ENCODE measurements at regions of chr6 and their contacts with region 1.

Region 1: DNA sequence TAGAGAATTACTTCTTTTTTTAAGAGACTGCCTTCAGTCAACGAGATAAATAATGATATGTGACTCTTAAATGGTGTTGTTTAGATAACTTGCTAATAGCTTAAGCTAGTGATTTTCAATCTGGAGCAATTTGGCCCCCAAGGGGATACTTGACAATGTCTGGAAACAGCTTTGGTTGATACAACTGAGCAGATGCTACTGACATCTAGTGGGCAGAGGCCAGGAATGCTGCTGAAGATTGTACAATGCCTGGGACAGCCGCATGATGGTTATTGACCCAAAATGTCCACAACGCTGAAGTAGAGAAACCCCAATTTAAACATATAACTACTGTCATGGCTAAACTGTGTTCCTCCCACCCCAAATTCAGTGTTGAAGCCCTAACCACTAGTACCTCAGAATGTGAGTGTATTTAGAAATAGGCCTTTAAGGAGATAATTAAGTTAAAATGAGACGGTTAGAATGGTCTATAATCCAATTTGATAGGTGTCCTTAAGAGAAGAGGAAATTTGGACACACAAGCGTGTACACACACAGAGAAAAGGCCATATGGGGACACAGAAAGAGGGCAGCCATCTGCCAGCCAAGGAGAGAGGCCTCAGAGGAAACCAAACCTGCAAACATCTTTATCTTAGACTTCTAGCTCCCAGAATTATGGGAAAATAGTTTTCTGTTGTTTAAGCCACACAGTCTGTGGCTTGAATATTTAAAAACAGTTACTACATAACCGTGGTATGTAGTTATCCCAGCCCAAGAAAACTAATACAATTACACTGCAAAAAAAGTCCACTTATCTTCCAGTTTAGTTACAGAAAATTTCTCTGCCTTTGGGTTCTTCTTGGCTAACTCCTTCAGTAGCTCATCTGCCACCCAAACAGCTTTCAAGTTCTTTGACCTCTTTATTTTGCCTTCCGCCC is 22.2 kb downstream of the RWDD2A start:
- DNase-seq: peak; percentile 52 to 63
- H3K4me3 ChIP-seq: no peak overlapping the region
- H3K4me3 Mint-ChIP-seq: no peak overlapping the region
- H3K27ac Mint-ChIP-seq: no peak overlapping the region
- H3K4me1 ChIP-seq: no peaks in the 10 kb centered on the region; the same call in 1 of the 2 replicates
- H3K4me1 Mint-ChIP-seq: peaks cover 6% of the 10 kb centered on the region
- H3K27me3 ChIP-seq: no peaks in the 10 kb centered on the region
- H3K27me3 Mint-ChIP-seq: no peaks in the 10 kb centered on the region
- CTCF ChIP-seq: peak; percentile 46 to 89

Region 2: DNA sequence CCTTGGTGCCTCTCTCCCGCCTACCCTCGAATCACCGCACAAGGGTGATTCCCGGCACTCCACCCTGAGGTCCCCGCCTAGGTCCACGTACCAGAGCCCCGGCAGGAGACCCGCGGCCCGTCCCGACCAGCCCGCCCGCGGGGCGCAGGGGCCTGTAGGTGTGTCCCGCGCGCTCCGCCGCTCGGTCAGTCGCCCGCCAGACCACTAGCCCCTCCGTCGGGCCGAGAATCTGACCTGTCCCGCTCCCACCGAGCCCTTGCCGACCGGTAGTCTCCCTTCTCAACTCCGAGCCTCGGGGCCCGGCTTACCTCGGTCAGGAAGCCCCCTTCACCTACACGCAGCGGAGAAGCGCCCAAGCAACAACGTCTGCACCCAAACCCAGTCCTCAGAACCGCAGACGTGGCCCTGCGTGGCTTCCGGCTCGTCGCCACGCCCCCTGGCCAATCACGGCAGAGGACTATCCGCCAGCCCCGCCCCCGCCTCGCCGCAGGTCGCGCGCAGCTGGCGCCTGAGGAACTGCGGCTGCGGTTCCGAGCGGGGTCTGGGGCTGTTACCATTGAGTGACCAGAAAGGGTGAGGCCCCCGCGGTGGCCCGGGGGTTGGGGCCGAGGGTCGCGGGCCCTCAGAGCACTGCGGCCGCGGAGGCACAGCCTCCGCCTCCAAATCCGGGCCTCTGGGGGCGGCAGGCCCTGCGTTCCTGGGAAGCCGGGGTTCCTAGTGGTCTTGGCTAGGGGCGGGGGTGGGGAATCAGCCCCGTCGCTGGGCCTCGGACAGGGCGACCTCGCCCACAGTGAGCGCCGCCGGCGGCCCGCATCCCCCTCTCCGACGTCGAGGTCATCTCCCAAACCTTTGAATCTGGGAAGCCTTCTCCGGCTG is 22.3 kb before region 1 on chr6 and contains the starts of genes PGM3 and RWDD2A:
- CTCF ChIA-PET with region 1: no interaction called
- POLR2A ChIA-PET with region 1: interaction called, 7 read pairs
- intact Hi-C with region 1: loop called (anchors 1 kb)
- DNase-seq: peak; percentile 89 to 94
- H3K4me3 ChIP-seq: peak within 1 kb of the TSS; percentile 97
- H3K4me3 Mint-ChIP-seq: peak within 1 kb of the TSS; percentile 90
- H3K27ac Mint-ChIP-seq: peak within 1 kb of the TSS; percentile 92
- H3K4me1 ChIP-seq: peaks cover 24% of the 10 kb centered on the region
- H3K4me1 Mint-ChIP-seq: peaks cover 16% of the 10 kb centered on the region
- H3K27me3 ChIP-seq: no peaks in the 10 kb centered on the region
- H3K27me3 Mint-ChIP-seq: no peaks in the 10 kb centered on the region
- CTCF ChIP-seq: no peak
- total RNA-seq, gene PGM3: 96.4 and 97.0 TPM in 2 replicates
- total RNA-seq, gene RWDD2A: 3.5 and 3.6 TPM in 2 replicates